Naive thymus-derived CD8-positive, alpha-beta T cell (primary cell): ENCODE measurements at regions of chr19 and their contacts with region 1.

Region 1: DNA sequence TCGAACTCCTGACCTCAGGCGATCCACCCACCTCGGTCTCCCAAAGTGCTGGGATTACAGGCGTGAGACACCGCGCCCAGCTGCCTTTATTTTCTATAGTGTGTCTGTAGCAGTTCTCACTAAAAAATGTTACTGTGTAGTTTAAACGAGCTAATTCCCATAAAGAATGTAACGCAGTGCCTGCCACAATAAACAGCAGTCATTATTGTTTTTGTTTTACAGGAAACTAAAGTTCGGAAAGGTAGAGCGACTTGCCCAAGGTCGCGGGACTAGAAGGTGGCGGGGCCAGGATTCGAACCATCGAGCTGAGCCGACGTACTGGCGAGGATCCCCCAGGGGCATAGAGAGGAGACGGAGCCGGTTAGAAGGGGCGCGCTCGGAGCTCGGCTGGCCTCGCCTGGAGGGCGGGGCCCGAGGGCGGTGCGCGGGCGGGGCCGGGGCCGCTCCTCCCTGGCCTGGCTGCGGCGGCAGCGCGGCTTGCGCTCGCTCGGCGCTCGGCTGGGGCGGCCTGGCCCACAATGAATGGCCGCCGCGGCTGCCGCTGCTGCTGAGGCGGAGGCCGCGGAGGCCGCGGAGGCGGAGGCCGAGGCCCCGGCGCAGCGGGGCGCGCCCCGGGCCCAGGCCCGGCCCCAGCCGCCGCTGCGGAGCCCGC is at the start of gene NACC1:
- DNase-seq: peak; percentile 83 to 92 (median 88)
- ATAC-seq: peak; percentile 76 to 83
- H3K4me3 Mint-ChIP-seq: peak within 1 kb of the TSS; percentile 86 to 99 (median 98)
- H3K27ac Mint-ChIP-seq: peak within 1 kb of the TSS; percentile 92 to 98 (median 94)
- H3K4me1 Mint-ChIP-seq: peaks cover 26 to 65% (median 61%) of the 10 kb centered on the region in 4 donors
- H3K27me3 Mint-ChIP-seq: no peaks in the 10 kb centered on the region
- polyA plus RNA-seq, gene NACC1: 1.4 to 3.4 (median 1.9) TPM

Region 2: GRCh38 chr19:13045812-13046211 is 72.1 kb before region 1 on chr19:
- POLR2A ChIA-PET with region 1: no interaction called
- DNase-seq: no peak
- ATAC-seq: no peak
- H3K4me3 Mint-ChIP-seq: no peak overlapping the region
- H3K27ac Mint-ChIP-seq: peak overlapping the region in 3 of 10 donors; percentile 22 to 38 (median 28)
- H3K4me1 Mint-ChIP-seq: peaks cover 22 to 30% (median 27%) of the 10 kb centered on the region in 4 donors
- H3K27me3 Mint-ChIP-seq: peaks cover 0 to 10% (median 5%) of the 10 kb centered on the region in 5 donors

Region 3: GRCh38 chr19:13082192-13083007 is 35.5 kb before region 1 on chr19:
- POLR2A ChIA-PET with region 1: no interaction called
- DNase-seq: no peak
- ATAC-seq: no peak
- H3K4me3 Mint-ChIP-seq: no peak overlapping the region
- H3K27ac Mint-ChIP-seq: peak overlapping the region in 1 of 10 donors; percentile 53
- H3K4me1 Mint-ChIP-seq: peaks cover 0 to 11% (median 6%) of the 10 kb centered on the region in 4 donors
- H3K27me3 Mint-ChIP-seq: no peaks in the 10 kb centered on the region

Region 4: GRCh38 chr19:13099073-13099999 is 18.6 kb before region 1 on chr19:
- POLR2A ChIA-PET with region 1: interaction called, 67 read pairs
- DNase-seq: peak; percentile 65 to 89 (median 76)
- ATAC-seq: peak; percentile 68 to 75
- H3K4me3 Mint-ChIP-seq: peak overlapping the region; percentile 60 to 89 (median 79)
- H3K27ac Mint-ChIP-seq: peak overlapping the region; percentile 73 to 97 (median 94)
- H3K4me1 Mint-ChIP-seq: peaks cover 30 to 63% (median 61%) of the 10 kb centered on the region in 4 donors
- H3K27me3 Mint-ChIP-seq: peaks cover 6 to 22% (median 6%) of the 10 kb centered on the region in 5 donors

Region 5: GRCh38 chr19:13104360-13104847 is 13.5 kb before region 1 on chr19:
- POLR2A ChIA-PET with region 1: interaction called, 67 read pairs
- DNase-seq: peak; percentile 42 to 79 (median 64)
- ATAC-seq: peak; percentile 42 to 60
- H3K4me3 Mint-ChIP-seq: peak overlapping the region; percentile 88 to 96 (median 91)
- H3K27ac Mint-ChIP-seq: peak overlapping the region; percentile 79 to 96 (median 92)
- H3K4me1 Mint-ChIP-seq: peaks cover 14 to 56% (median 47%) of the 10 kb centered on the region in 4 donors
- H3K27me3 Mint-ChIP-seq: no peaks in the 10 kb centered on the region

Region 6: DNA sequence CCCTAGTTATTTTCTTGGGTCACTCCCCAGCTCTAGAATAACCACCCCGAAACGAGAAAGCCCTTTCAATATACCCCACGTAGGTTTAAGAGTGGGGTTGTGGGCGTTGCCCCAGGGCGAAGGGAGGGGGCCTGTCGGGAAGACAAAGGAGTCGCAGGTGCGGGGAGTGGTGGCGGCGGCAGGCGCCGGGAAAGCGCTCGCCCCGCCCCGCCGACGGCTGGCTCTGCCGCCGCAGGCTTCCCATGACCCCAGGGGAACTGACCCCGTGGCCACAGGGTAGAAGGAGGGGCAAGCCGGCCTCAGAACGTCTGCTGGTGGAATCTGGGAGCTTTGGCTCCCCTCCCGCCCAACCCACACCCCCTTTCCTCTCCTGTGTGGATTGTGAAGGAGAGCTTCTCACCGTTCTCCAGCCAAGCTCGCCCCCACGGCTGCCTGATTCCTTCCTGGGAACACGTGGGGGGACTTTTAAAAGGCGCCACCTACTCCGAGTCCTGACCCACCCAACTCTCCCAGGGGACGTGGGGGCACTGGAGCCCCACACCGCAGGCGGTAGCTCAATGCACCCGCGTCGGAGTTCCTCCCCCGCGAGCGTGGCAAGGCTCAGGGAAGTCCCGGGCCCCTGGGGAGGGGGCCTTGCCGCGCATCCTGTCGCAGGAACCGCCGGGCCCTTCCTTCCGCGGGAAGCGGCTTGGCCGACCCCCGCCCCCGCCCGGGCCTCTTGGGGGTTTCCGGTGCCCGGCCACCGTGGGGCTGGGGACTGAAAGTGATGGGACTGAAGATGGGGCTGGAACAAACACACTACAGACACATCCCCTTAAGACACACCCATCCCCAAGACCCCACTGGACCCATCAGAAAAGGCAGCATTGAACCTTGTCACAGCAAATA is 37.8 kb after region 1 on chr19:
- POLR2A ChIA-PET with region 1: interaction called, 68 read pairs
- DNase-seq: peak; percentile 67 to 89 (median 78)
- ATAC-seq: peak; percentile 8 to 35
- H3K4me3 Mint-ChIP-seq: peak overlapping the region; percentile 93 to 99 (median 98)
- H3K27ac Mint-ChIP-seq: peak overlapping the region; percentile 97 to 100 (median 98)
- H3K4me1 Mint-ChIP-seq: peaks cover 35 to 59% (median 50%) of the 10 kb centered on the region in 4 donors
- H3K27me3 Mint-ChIP-seq: peaks cover 0 to 3% (median 0%) of the 10 kb centered on the region in 5 donors